Activated CD8-positive, alpha-beta T cell treated with anti-CD3 and anti-CD28 coated beads for 36 hours (primary cell): ENCODE measurements at regions of chr19 and their contacts with region 1.

Region 1: GRCh38 chr19:39970675-39971379 is at the start of gene PSMC4:
- DNase-seq: peak; percentile 99
- ATAC-seq: peak; percentile 97
- H3K4me3 Mint-ChIP-seq: peak within 1 kb of the TSS; percentile 95
- H3K27ac Mint-ChIP-seq: peak within 1 kb of the TSS; percentile 98
- H3K4me1 Mint-ChIP-seq: peaks cover 48% of the 10 kb centered on the region
- H3K27me3 Mint-ChIP-seq: no peaks in the 10 kb centered on the region
- CTCF ChIP-seq: peak; percentile 72
- total RNA-seq, gene PSMC4: 105 to 107 TPM

Region 2: DNA sequence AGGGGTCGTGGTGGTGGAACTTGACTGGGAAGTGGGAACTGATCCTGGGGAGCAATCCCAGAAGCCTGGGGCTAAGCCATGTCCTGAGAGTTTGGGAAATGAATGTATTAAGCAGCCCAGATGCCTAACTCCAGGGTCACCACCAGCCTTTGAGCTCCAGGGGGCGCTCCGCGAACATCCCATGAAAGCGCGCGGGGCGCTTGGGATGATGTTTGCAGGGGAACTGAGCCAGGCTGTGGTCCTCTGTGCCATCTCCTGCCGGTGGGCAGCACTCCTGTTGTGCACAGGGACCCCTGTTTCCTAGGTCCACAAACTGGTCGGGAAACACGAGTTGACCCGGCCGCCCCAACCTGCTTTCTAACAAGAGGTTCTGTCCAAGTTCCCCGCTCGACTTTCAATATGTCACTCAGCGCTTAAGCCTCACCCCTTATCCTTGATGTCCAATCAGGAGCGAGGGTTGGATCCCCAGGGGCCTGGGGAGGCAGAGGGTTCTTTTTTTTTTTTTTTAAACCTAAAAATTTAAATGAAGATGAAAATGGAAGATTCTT is 177.8 kb before region 1 on chr19:
- CTCF ChIA-PET with region 1: interaction called, 10 read pairs
- POLR2A ChIA-PET with region 1: no interaction called
- intact Hi-C with region 1: no loop called
- DNase-seq: peak; percentile 86
- ATAC-seq: peak; percentile 96
- H3K4me3 Mint-ChIP-seq: peak overlapping the region; percentile 75
- H3K27ac Mint-ChIP-seq: no peak overlapping the region
- H3K4me1 Mint-ChIP-seq: peaks cover 4% of the 10 kb centered on the region
- H3K27me3 Mint-ChIP-seq: peaks cover 4% of the 10 kb centered on the region
- CTCF ChIP-seq: peak; percentile 98

Region 3: DNA sequence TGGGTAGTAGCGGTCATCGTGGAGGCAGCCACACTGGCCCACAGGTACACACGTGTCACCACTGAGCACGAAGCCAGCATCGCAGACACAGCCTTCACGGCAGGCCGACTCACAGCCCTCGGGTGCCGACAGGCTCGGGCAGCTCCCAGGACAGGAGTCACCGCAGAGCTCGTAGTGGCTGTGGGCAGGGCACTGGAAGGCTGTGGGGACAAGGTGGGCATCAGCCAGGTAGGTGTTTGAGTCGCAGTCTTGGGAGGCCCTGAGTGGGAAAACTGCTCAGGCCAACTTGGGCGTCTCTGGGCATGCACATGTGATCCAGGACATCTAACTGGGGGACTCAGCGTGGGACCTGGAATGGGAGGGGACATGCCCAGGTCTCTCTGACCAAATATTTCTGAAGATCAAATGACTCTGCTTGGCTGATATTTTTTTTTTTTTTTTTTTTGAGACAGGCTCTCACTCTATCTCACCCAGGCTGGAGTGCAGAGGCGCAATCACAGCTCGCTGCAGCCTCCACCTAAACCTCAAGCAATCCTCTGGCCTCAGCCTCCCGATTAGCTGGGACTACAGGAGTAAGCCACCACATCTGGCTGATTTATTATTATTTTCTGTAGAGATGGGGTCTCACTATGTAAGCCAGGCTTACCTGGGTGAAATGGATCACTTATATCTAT is 80.8 kb before region 1 on chr19:
- CTCF ChIA-PET with region 1: interaction called, 9 read pairs
- POLR2A ChIA-PET with region 1: no interaction called
- intact Hi-C with region 1: loop called (anchors 10 kb)
- DNase-seq: no peak
- ATAC-seq: no peak
- H3K4me3 Mint-ChIP-seq: no peak overlapping the region
- H3K27ac Mint-ChIP-seq: no peak overlapping the region
- H3K4me1 Mint-ChIP-seq: peaks cover 4% of the 10 kb centered on the region
- H3K27me3 Mint-ChIP-seq: no peaks in the 10 kb centered on the region
- CTCF ChIP-seq: no peak

Region 4: DNA sequence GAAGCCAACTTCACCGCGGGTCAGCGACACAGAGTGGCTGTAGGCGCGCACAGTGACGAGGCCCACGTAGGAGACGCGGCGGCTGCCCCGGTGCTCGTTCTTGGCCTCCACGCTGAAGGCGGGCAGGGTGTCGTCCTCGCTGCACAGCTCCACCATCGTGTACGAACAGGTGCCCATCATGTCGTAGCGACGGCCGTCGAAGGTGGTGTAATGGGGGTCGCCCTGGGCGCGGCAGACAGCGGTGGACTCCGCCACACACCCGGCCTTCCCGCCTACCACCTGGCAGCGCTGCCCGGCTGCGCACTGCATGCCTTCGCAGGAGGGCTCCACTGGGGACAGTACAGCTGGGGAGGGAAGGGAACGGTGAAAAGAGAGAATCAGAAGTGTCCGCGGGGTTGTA is 46.4 kb before region 1 on chr19:
- CTCF ChIA-PET with region 1: interaction called, 10 read pairs
- POLR2A ChIA-PET with region 1: interaction called, 6 read pairs
- intact Hi-C with region 1: no loop called
- DNase-seq: no peak
- ATAC-seq: no peak
- H3K4me3 Mint-ChIP-seq: no peak overlapping the region
- H3K27ac Mint-ChIP-seq: no peak overlapping the region
- H3K4me1 Mint-ChIP-seq: peaks cover 8% of the 10 kb centered on the region
- H3K27me3 Mint-ChIP-seq: no peaks in the 10 kb centered on the region
- CTCF ChIP-seq: no peak

Region 5: DNA sequence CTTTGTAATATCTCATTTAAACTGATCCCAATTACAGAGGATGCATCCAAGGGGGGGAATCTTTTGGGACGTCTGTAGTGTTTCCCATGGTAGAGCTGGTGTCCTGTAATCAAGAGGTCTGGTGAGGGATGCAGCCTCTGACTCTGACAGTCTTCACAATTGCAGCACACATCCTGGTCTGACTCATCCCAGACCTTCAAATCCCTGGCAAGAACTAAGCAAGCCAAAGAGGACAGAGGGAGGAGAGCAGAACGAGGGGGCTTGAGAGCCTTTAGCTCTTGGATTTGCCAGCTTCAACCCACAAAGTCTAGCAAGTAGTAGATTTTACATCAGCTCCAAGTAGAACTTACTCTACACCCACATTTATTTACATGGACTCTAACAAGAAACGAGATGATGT is 19.1 kb before region 1 on chr19:
- CTCF ChIA-PET with region 1: interaction called, 17 read pairs
- POLR2A ChIA-PET with region 1: interaction called, 21 read pairs
- intact Hi-C with region 1: no loop called
- DNase-seq: no peak
- ATAC-seq: peak; percentile 45
- H3K4me3 Mint-ChIP-seq: peak overlapping the region; percentile 29
- H3K27ac Mint-ChIP-seq: peak overlapping the region; percentile 98
- H3K4me1 Mint-ChIP-seq: peaks cover 70% of the 10 kb centered on the region
- H3K27me3 Mint-ChIP-seq: no peaks in the 10 kb centered on the region
- CTCF ChIP-seq: no peak

Region 6: DNA sequence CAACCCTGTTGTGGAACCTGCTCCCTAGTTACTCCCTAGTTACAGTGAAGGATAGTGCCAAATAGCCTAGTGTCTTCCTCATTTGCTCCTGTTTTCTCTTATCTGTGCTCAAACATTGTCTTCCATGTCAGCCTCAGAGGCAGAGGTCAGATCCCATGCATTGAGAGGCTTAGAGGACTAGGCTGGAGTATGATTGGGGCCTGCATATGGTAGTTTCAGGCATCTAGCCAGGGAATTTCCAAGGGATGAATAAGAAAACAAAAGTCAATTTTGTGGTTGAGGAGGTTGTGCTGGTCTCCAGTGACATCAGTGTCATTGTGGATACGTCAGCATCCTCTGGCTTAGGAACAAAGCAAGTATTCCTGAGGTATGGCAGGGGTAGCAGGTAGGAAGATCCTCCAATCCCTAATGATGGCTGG is 35.5 kb after region 1 on chr19:
- CTCF ChIA-PET with region 1: no interaction called
- POLR2A ChIA-PET with region 1: no interaction called
- intact Hi-C with region 1: no loop called
- DNase-seq: no peak
- ATAC-seq: no peak
- H3K4me3 Mint-ChIP-seq: no peak overlapping the region
- H3K27ac Mint-ChIP-seq: no peak overlapping the region
- H3K4me1 Mint-ChIP-seq: peaks cover 5% of the 10 kb centered on the region
- H3K27me3 Mint-ChIP-seq: no peaks in the 10 kb centered on the region
- CTCF ChIP-seq: no peak